ENCODE measurements at regions of chr1 and their contacts with region 1.

Region 1: DNA sequence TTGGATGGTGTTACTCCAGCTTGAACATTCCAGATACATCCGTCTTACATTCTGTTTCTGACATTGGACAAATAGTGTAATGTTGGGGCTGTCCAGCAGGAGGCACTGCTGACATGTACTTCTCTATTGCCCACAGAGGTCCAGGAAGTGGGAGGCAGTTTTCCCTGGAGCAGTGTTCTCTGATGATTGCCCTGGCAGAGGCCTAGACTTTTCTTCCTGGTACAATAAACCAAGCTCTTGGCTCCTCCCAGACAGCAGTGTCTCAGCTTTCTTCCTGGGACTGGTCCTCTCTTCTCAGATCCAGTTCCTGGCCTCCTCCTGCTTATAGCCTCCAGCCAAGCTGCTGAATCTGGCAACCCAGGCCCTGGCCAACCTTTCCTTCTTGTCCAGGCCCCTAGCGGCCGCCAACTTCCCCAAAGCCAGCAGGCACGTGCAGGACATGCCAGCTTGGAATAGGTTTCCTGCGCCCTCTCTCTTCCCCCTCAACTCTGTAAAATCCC is 14.9 kb upstream of the IFNLR1 start:
- DNase-seq: peak in 30 of 35 experiments; percentile 10 to 74 (median 38)
- ATAC-seq: peak in 3 of 4 experiments; percentile 35 to 54 (median 51)
- H3K4me3 ChIP-seq: no peak overlapping the region
- H3K4me3 Mint-ChIP-seq: no peak overlapping the region
- H3K27ac ChIP-seq: no peak overlapping the region
- H3K27ac Mint-ChIP-seq: no peak overlapping the region
- H3K4me1 ChIP-seq: peaks cover 4 to 7% of the 10 kb centered on the region in 2 experiments
- H3K4me1 Mint-ChIP-seq: peaks cover 5 to 13% (median 7%) of the 10 kb centered on the region in 3 donors
- H3K27me3 ChIP-seq: peaks cover 0 to 18% of the 10 kb centered on the region in 2 experiments
- H3K27me3 Mint-ChIP-seq: no peaks in the 10 kb centered on the region

Region 2: GRCh38 chr1:24150234-24151174 is 51.5 kb before region 1 on chr1:
- CTCF ChIA-PET with region 1: interaction called in 1 of 2 experiments, 18 read pairs
- POLR2A ChIA-PET with region 1: no interaction called
- DNase-seq: peak; percentile 60 to 89 (median 82)
- ATAC-seq: peak; percentile 93 to 96 (median 95)
- H3K4me3 ChIP-seq: peak overlapping the region; percentile 31 to 54
- H3K4me3 Mint-ChIP-seq: peak overlapping the region; percentile 50 to 53 (median 52)
- H3K27ac ChIP-seq: no peak overlapping the region
- H3K27ac Mint-ChIP-seq: no peak overlapping the region
- H3K4me1 ChIP-seq: peaks cover 4 to 10% of the 10 kb centered on the region in 2 experiments
- H3K4me1 Mint-ChIP-seq: peaks cover 6 to 18% (median 15%) of the 10 kb centered on the region in 3 donors
- H3K27me3 ChIP-seq: peaks cover 20 to 45% of the 10 kb centered on the region in 2 experiments
- H3K27me3 Mint-ChIP-seq: peaks cover 20 to 43% of the 10 kb centered on the region in 2 donors

Region 3: GRCh38 chr1:24386241-24386640 is 184.2 kb after region 1 on chr1:
- CTCF ChIA-PET with region 1: interaction called, 13 to 196 read pairs
- POLR2A ChIA-PET with region 1: interaction called, 3 to 4 read pairs
- DNase-seq: no peak
- ATAC-seq: no peak
- H3K4me3 ChIP-seq: no peak overlapping the region
- H3K4me3 Mint-ChIP-seq: no peak overlapping the region
- H3K27ac ChIP-seq: no peak overlapping the region
- H3K27ac Mint-ChIP-seq: peak overlapping the region in 1 of 2 donors; percentile 45
- H3K4me1 ChIP-seq: peaks cover 0 to 13% of the 10 kb centered on the region in 2 experiments
- H3K4me1 Mint-ChIP-seq: peaks cover 12 to 32% (median 28%) of the 10 kb centered on the region in 3 donors
- H3K27me3 ChIP-seq: no peaks in the 10 kb centered on the region
- H3K27me3 Mint-ChIP-seq: no peaks in the 10 kb centered on the region

Region 4: DNA sequence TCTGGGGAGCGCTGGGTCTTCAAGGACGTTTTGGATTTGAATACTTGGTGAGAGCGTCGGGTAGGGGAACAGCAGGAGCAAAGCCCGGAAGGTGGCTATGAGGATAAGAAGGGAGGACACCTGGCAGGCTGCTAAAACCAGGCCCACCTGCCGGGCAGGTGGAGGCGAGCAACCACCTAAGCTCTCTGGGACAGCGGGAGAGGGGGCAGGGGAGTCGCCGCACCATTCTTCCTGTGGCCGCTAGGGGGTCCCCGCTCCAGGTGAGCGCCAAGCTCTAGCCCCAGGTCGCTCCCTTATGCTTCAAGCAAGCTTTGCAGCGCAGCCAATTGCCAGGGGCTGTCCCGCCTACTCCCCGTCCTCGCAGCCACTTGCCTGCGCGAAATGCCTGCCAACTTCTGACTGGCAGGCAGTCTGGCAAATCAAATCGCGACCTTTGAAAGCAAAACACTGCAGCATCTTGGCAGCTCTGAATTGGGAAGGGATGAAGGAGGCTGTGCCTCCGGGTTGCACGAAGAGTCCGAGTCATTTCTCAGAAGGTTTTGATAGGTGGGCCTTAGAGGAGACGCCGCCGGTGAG is 213.4 kb after region 1 on chr1 and contains the start of gene NIPAL3:
- CTCF ChIA-PET with region 1: interaction called in 1 of 2 experiments, 20 read pairs
- POLR2A ChIA-PET with region 1: no interaction called
- DNase-seq: peak; percentile 93 to 100 (median 98)
- ATAC-seq: peak; percentile 94 to 98 (median 96)
- H3K4me3 ChIP-seq: peak within 1 kb of the TSS; percentile 85 to 93
- H3K4me3 Mint-ChIP-seq: peak within 1 kb of the TSS; percentile 92 to 99 (median 93)
- H3K27ac ChIP-seq: peak within 1 kb of the TSS; percentile 56
- H3K27ac Mint-ChIP-seq: peak within 1 kb of the TSS; percentile 91 to 93
- H3K4me1 ChIP-seq: peaks cover 31 to 54% of the 10 kb centered on the region in 2 experiments
- H3K4me1 Mint-ChIP-seq: peaks cover 66 to 75% (median 72%) of the 10 kb centered on the region in 3 donors
- H3K27me3 ChIP-seq: no peaks in the 10 kb centered on the region
- H3K27me3 Mint-ChIP-seq: no peaks in the 10 kb centered on the region
- total RNA-seq, gene NIPAL3: 49.0 to 71.4 (median 59.7) TPM

Region 5: GRCh38 chr1:24635195-24635843 is 433.3 kb after region 1 on chr1:
- CTCF ChIA-PET with region 1: interaction called, 3 to 16 read pairs
- POLR2A ChIA-PET with region 1: no interaction called
- DNase-seq: peak in 3 of 35 experiments; percentile 12 to 74 (median 13)
- ATAC-seq: peak; percentile 76 to 97 (median 86)
- H3K4me3 ChIP-seq: no peak overlapping the region
- H3K4me3 Mint-ChIP-seq: no peak overlapping the region
- H3K27ac ChIP-seq: no peak overlapping the region
- H3K27ac Mint-ChIP-seq: no peak overlapping the region
- H3K4me1 ChIP-seq: no peaks in the 10 kb centered on the region
- H3K4me1 Mint-ChIP-seq: peaks cover 2 to 6% (median 6%) of the 10 kb centered on the region in 3 donors
- H3K27me3 ChIP-seq: peaks cover 0 to 15% of the 10 kb centered on the region in 2 experiments
- H3K27me3 Mint-ChIP-seq: peaks cover 0 to 2% of the 10 kb centered on the region in 2 donors